ENCODE measurements at regions of chr2 and their contacts with region 1.

Region 1: GRCh38 chr2:28958689-28959088 is 22.4 kb upstream of the TOGARAM2 start:
- DNase-seq: no peak
- H3K4me3 ChIP-seq: no peak overlapping the region
- H3K27ac ChIP-seq: no peak overlapping the region
- H3K4me1 ChIP-seq: no peaks in the 10 kb centered on the region
- H3K27me3 ChIP-seq: no peaks in the 10 kb centered on the region
- CTCF ChIP-seq: peak; percentile 39 to 69 (median 66)
- POLR2A ChIP-seq: no peak

Region 2: GRCh38 chr2:28821295-28821958 is 137.3 kb before region 1 on chr2:
- intact Hi-C with region 1: no loop called
- DNase-seq: no peak
- H3K4me3 ChIP-seq: no peak overlapping the region
- H3K27ac ChIP-seq: no peak overlapping the region
- H3K4me1 ChIP-seq: no peaks in the 10 kb centered on the region
- H3K27me3 ChIP-seq: no peaks in the 10 kb centered on the region
- CTCF ChIP-seq: peak; percentile 47 to 77 (median 53)
- POLR2A ChIP-seq: no peak

Region 3: DNA sequence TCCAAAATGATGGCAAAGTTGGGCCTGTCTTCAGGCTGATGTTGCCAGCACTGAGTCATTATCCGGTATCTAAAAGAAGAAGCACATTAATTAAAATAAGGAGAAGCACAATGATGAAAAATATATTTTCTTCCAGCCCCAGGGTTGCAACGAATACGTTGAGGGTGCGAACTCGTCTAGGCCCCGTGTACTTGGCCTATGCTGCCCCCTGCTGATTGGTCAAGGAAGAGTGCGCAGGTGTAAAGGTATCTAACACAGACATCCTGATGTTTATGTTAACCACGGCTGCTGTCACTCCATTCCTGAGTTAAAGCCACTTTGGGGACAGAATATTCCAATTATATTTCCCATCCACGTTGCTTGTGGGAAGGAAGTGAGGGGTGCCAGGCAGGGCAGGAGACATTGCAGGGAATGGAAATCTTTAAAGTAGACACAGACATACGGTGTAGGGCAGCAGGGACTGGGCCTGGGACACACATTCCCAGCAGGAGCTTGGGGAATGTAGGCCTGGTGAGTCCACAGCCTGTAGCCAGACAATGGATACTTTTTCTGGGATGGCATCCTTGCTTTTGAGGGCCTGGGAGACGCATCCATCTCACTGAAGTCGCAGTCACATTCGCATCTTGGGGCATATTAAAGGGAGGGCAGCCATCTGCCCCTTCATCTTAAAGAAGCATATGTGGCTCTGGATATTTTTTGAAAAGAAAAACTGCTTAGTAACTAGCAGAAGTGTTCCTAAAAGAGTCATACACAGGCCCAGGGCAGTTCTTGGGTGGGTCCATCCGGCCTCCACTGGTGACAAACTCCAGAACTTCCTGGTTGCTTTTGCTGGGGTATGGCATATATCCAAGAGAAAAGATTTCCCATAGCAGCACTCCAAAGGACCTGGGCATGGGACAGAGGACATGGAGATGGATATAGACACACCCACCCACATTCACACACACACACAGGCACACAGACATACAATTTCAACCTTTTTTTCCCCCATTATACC is 238.4 kb after region 1 on chr2:
- intact Hi-C with region 1: loop called (anchors 2 kb)
- DNase-seq: no peak
- H3K4me3 ChIP-seq: no peak overlapping the region
- H3K27ac ChIP-seq: no peak overlapping the region
- H3K4me1 ChIP-seq: no peaks in the 10 kb centered on the region
- H3K27me3 ChIP-seq: no peaks in the 10 kb centered on the region
- CTCF ChIP-seq: peak; percentile 58 to 72 (median 68)
- POLR2A ChIP-seq: no peak

Region 4: GRCh38 chr2:29374823-29375222 is 416.1 kb after region 1 on chr2:
- intact Hi-C with region 1: loop called (anchors 5 kb)
- DNase-seq: no peak
- H3K4me3 ChIP-seq: no peak overlapping the region
- H3K27ac ChIP-seq: no peak overlapping the region
- H3K4me1 ChIP-seq: no peaks in the 10 kb centered on the region
- H3K27me3 ChIP-seq: no peaks in the 10 kb centered on the region
- CTCF ChIP-seq: no peak
- POLR2A ChIP-seq: no peak

Measured in vagina (tissue), 2 donors.